CD8-positive, alpha-beta T cell (primary cell): ENCODE measurements at regions of chr2 and their contacts with region 1.

Region 1: DNA sequence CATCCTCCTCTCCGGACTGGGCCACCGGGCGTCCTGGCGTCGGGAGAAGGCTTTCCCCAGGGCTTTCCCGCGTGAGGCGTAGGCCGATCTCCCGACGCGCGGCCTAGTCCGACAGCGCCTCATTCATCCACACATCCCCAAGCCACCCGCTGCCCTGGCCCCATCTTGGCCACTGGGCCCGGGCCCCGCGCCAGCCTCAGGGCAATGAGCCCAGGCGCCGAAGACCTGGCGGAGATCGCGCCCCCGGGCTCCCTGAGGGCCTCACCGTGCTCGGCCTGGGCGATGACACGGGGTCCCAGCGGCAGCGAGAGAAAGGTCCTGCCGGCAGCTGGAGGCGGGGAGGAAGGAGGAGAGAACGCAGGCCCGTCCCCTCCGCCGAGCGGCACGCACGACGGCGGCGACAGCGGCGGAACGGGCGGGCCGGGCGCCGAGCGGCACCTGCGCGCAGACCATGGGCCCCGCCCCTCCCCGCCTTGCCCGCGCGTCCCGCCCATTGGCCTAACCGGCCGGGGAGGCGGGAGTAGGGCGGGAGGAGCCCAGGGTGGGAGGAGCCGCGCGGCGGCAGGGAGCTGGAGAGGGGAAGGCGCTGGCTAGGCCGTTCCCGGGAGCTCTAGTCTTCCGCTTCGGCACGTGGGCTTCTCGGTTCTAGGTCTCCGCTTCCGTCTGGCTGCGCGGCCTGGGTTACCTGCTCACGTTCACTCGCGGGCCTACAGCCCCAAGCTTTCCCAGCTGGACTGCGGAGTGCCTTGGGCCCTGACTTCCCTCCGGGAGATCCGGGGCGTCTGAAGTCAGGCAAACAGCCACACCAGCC is at the start of gene OLA1:
- DNase-seq: peak; percentile 90 to 98 (median 96)
- ATAC-seq: peak; percentile 96
- H3K4me3 ChIP-seq: peak within 1 kb of the TSS; percentile 78 to 94
- H3K4me3 Mint-ChIP-seq: peak within 1 kb of the TSS; percentile 84
- H3K27ac ChIP-seq: peak within 1 kb of the TSS; percentile 49 to 78
- H3K27ac Mint-ChIP-seq: peak within 1 kb of the TSS; percentile 80
- H3K4me1 ChIP-seq: peaks cover 6% of the 10 kb centered on the region
- H3K4me1 Mint-ChIP-seq: peaks cover 31% of the 10 kb centered on the region
- H3K27me3 ChIP-seq: no peaks in the 10 kb centered on the region
- H3K27me3 Mint-ChIP-seq: no peaks in the 10 kb centered on the region
- CTCF ChIP-seq: no peak
- total RNA-seq, gene OLA1: 35.3 to 38.8 TPM

Region 2: GRCh38 chr2:173734797-173735196 is 513.6 kb before region 1 on chr2:
- CTCF ChIA-PET with region 1: no interaction called
- POLR2A ChIA-PET with region 1: no interaction called
- intact Hi-C with region 1: no loop called
- DNase-seq: no peak
- ATAC-seq: no peak
- H3K4me3 ChIP-seq: no peak overlapping the region
- H3K4me3 Mint-ChIP-seq: no peak overlapping the region
- H3K27ac ChIP-seq: no peak overlapping the region
- H3K27ac Mint-ChIP-seq: no peak overlapping the region
- H3K4me1 ChIP-seq: no peaks in the 10 kb centered on the region
- H3K4me1 Mint-ChIP-seq: no peaks in the 10 kb centered on the region
- H3K27me3 ChIP-seq: no peaks in the 10 kb centered on the region
- H3K27me3 Mint-ChIP-seq: peaks cover 15% of the 10 kb centered on the region
- CTCF ChIP-seq: no peak

Region 3: DNA sequence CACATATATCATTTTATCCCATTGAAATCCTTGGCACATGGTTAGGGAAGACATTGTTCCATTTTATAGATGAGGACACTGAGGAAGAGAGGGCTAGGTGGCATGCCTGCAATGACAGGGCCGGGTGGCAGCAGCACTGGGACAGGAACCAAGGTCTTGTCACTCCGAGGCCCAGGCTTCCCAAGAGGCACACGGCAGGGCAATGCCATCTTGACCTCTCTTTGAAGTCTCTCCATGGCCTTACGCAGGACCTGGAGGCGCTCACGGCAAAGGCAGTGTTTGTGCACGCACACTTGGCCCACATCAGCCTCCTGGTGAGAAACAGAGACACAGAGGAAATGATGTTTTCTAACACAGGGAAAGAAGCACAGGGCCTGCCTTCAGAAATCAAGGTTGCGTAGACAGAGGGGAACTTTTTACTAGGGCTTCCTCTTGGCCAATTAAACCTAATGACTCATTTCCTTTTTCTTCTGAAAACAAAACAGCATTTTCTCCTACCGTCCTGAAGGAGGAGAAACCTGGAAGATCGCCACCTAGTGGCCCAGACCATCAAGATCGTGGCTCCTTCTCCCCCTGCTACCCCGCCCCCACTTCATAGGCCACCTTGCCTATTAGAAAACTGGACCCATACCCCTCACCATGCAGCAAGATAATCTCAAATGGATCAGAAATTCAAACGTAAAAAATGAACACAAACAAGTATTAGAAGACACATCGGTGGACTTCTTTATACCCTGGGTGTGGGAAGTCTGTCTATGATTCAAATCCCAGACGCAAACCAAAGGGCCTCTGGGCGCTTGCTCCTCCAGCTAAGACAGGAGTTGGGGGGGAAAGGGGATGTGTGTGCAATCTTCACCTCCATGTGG is 208.6 kb before region 1 on chr2:
- CTCF ChIA-PET with region 1: no interaction called
- POLR2A ChIA-PET with region 1: no interaction called
- intact Hi-C with region 1: loop called in 1 of 2 experiments (anchors 10 kb)
- DNase-seq: peak; percentile 54 to 93 (median 85)
- ATAC-seq: peak; percentile 94
- H3K4me3 ChIP-seq: peak overlapping the region; percentile 3 to 43
- H3K4me3 Mint-ChIP-seq: peak overlapping the region; percentile 69
- H3K27ac ChIP-seq: peak overlapping the region; percentile 47 to 84
- H3K27ac Mint-ChIP-seq: peak overlapping the region; percentile 87
- H3K4me1 ChIP-seq: peaks cover 5% of the 10 kb centered on the region
- H3K4me1 Mint-ChIP-seq: peaks cover 8% of the 10 kb centered on the region
- H3K27me3 ChIP-seq: no peaks in the 10 kb centered on the region
- H3K27me3 Mint-ChIP-seq: no peaks in the 10 kb centered on the region
- CTCF ChIP-seq: peak; percentile 67

Region 4: DNA sequence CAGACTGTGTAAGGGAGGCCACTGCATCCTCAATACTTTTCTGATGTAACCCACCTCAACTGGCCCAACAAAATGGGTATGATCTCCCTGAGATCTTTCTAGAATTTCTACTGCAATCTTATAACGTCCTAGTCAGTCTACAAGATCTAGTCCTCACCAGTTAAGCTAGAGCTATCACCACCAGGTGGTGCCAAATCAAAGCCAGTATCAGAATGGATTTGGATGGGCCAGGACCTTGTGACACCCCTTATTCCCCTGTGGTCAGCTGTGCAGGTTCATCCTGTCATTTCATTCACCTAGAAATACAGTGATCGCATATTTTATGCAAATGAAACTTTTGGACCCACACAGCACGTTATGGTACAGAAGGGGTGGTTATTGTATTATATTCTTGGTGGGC is 90.4 kb before region 1 on chr2:
- CTCF ChIA-PET with region 1: no interaction called
- POLR2A ChIA-PET with region 1: no interaction called
- intact Hi-C with region 1: no loop called
- DNase-seq: peak in 7 of 9 experiments; percentile 2 to 48 (median 20)
- ATAC-seq: peak; percentile 36
- H3K4me3 ChIP-seq: no peak overlapping the region
- H3K4me3 Mint-ChIP-seq: no peak overlapping the region
- H3K27ac ChIP-seq: no peak overlapping the region
- H3K27ac Mint-ChIP-seq: no peak overlapping the region
- H3K4me1 ChIP-seq: no peaks in the 10 kb centered on the region
- H3K4me1 Mint-ChIP-seq: peaks cover 4% of the 10 kb centered on the region
- H3K27me3 ChIP-seq: no peaks in the 10 kb centered on the region
- H3K27me3 Mint-ChIP-seq: no peaks in the 10 kb centered on the region
- CTCF ChIP-seq: no peak

Region 5: GRCh38 chr2:174280596-174280995 is 32.2 kb after region 1 on chr2:
- CTCF ChIA-PET with region 1: no interaction called
- POLR2A ChIA-PET with region 1: no interaction called
- intact Hi-C with region 1: no loop called
- DNase-seq: no peak
- ATAC-seq: no peak
- H3K4me3 ChIP-seq: no peak overlapping the region
- H3K4me3 Mint-ChIP-seq: no peak overlapping the region
- H3K27ac ChIP-seq: no peak overlapping the region
- H3K27ac Mint-ChIP-seq: no peak overlapping the region
- H3K4me1 ChIP-seq: no peaks in the 10 kb centered on the region
- H3K4me1 Mint-ChIP-seq: no peaks in the 10 kb centered on the region
- H3K27me3 ChIP-seq: peaks cover 0 to 2% of the 10 kb centered on the region in 2 experiments
- H3K27me3 Mint-ChIP-seq: peaks cover 28% of the 10 kb centered on the region
- CTCF ChIP-seq: no peak

Region 6: DNA sequence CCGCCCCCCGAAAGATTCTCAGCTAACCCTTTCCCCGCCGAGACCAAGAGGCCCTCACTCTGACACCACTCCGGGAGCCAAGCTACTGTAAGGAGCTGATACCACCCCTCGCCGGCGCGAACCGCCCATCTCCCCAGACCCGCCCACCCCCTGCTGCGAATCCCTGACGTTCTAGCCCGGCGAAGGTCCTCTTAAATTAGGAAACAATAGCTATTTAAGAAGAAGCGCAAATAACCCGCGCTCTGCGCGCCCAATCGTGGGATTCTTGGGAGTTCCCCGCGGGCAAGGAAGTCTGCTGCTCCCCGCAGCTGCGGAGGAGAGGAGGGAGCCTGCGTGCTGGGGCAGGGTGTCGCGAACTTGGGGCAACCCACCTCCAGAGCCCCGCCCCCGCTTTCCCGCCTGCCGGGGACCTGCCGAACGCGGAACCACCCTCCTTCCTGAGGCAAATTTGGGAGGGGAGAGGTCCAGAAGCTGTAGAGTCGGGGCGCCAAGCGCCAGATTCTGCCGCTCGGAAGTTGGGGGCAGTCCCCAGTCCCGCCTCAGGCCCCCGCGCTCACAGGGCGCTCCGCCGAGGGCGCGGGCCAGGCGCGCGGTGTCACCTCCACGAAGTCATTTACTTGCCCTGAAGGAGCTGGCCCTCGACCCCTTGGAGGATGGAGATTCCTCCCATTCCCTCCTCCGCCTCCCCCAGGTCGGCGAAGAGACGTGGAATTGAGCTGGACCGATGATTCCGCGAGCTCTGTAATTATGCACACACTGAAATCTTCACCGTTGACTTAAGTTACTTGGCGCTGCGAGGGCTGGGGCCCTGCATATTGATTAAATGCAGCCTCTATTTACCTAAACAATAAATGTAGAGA is 78.0 kb after region 1 on chr2:
- CTCF ChIA-PET with region 1: no interaction called
- POLR2A ChIA-PET with region 1: no interaction called
- intact Hi-C with region 1: loop called in 1 of 2 experiments (anchors 5 kb)
- DNase-seq: peak in 3 of 9 experiments; percentile 29 to 60 (median 50)
- ATAC-seq: peak; percentile 42
- H3K4me3 ChIP-seq: peak overlapping the region; percentile 33 to 35
- H3K4me3 Mint-ChIP-seq: peak overlapping the region; percentile 76
- H3K27ac ChIP-seq: no peak overlapping the region
- H3K27ac Mint-ChIP-seq: no peak overlapping the region
- H3K4me1 ChIP-seq: peaks cover 24% of the 10 kb centered on the region
- H3K4me1 Mint-ChIP-seq: peaks cover 29% of the 10 kb centered on the region
- H3K27me3 ChIP-seq: peaks cover 59% of the 10 kb centered on the region in 2 experiments
- H3K27me3 Mint-ChIP-seq: peaks cover 76% of the 10 kb centered on the region
- CTCF ChIP-seq: no peak

Region 7: DNA sequence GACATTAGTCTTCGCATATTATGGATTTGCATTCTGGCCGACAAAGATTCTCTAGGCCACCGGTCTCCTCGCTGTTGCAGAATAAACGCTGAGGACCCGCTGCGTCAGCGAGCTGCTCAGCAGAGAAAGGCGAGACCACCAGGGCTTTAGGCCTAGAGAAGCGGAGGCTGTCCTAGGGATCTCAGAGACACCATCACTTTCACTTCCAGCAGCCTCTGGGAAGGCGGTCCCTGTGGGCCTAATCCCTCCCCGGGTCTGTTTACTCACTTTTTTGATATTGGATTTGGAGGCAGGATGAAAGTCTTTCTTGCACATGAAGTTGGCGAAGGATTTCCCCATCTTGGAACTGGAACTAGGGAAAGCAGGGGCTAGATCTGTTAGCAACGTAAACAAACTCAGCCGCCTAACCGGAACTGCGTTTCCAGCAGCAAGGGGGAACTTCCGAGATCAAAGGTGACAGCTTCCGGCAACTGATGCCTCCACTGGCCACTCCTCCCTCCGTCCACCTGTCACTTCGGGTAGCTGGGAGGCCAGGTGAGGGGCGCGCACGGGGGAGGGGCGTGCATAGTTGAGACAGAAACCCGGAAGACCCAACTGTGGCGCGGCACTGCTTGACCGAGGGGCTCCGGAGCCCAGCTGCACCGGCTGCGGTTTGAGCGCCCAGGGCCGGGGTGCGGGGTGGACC is 147.0 kb after region 1 on chr2 and contains the start of gene SCRN3:
- CTCF ChIA-PET with region 1: no interaction called
- POLR2A ChIA-PET with region 1: no interaction called
- intact Hi-C with region 1: loop called (anchors 1 to 5 kb)
- DNase-seq: peak; percentile 55 to 92 (median 79)
- ATAC-seq: peak; percentile 90
- H3K4me3 ChIP-seq: peak within 1 kb of the TSS; percentile 78 to 91
- H3K4me3 Mint-ChIP-seq: peak within 1 kb of the TSS; percentile 98
- H3K27ac ChIP-seq: peak within 1 kb of the TSS; percentile 93 to 97
- H3K27ac Mint-ChIP-seq: peak within 1 kb of the TSS; percentile 100
- H3K4me1 ChIP-seq: peaks cover 29% of the 10 kb centered on the region
- H3K4me1 Mint-ChIP-seq: peaks cover 55% of the 10 kb centered on the region
- H3K27me3 ChIP-seq: no peaks in the 10 kb centered on the region
- H3K27me3 Mint-ChIP-seq: no peaks in the 10 kb centered on the region
- CTCF ChIP-seq: no peak
- total RNA-seq, gene SCRN3: 5.9 to 7.3 TPM

Region 8: DNA sequence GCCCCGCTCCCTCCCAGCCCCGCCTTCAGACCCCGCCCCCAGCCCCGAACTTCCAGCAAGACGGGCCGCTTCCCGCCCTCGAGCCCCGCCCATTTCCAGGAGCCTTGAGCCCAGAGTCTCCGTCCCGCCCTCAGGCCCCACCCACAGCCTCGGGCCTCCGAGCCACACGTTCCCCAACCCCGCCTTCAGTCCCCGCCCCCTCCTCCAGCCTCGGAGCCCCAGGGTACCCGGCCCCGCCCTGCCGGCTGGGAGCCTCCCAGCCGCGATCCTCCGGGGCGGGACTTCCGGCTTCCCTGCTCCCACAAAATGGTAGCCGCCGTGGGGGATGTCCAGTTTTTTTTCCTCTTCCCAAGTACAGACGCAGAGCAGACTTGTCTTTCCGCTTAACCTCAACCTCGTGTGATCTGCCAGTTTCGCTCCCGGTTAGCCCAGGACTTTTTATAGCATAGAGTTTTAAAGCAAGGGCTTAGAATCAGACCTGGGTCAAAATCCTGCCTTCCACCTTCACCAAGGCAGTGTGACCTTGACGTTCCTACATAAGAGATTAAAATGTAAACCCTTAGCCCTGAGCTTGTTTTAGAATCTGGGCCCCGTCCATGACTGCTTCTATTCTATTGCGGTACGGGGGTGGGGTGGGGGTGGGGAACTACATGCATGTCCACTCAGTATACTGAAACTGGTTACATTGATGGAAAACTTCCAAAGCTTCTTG is 238.9 kb after region 1 on chr2:
- CTCF ChIA-PET with region 1: no interaction called
- POLR2A ChIA-PET with region 1: no interaction called
- intact Hi-C with region 1: loop called in 1 of 2 experiments (anchors 2 kb)
- DNase-seq: peak; percentile 77 to 98 (median 97)
- ATAC-seq: peak; percentile 74
- H3K4me3 ChIP-seq: peak overlapping the region; percentile 83 to 86
- H3K4me3 Mint-ChIP-seq: peak overlapping the region; percentile 97
- H3K27ac ChIP-seq: peak overlapping the region; percentile 69 to 85
- H3K27ac Mint-ChIP-seq: peak overlapping the region; percentile 88
- H3K4me1 ChIP-seq: peaks cover 59% of the 10 kb centered on the region
- H3K4me1 Mint-ChIP-seq: peaks cover 73% of the 10 kb centered on the region
- H3K27me3 ChIP-seq: no peaks in the 10 kb centered on the region
- H3K27me3 Mint-ChIP-seq: no peaks in the 10 kb centered on the region
- CTCF ChIP-seq: no peak

Region 9: GRCh38 chr2:175167792-175168563 is 919.6 kb after region 1 on chr2 and contains the start of gene ATF2:
- CTCF ChIA-PET with region 1: no interaction called
- POLR2A ChIA-PET with region 1: no interaction called
- intact Hi-C with region 1: loop called in 1 of 2 experiments (anchors 2 kb)
- DNase-seq: peak; percentile 94 to 100 (median 96)
- ATAC-seq: peak; percentile 91
- H3K4me3 ChIP-seq: peak within 1 kb of the TSS; percentile 95 to 99
- H3K4me3 Mint-ChIP-seq: peak within 1 kb of the TSS; percentile 100
- H3K27ac ChIP-seq: peak within 1 kb of the TSS; percentile 87 to 92
- H3K27ac Mint-ChIP-seq: peak within 1 kb of the TSS; percentile 99
- H3K4me1 ChIP-seq: peaks cover 19% of the 10 kb centered on the region
- H3K4me1 Mint-ChIP-seq: peaks cover 48% of the 10 kb centered on the region
- H3K27me3 ChIP-seq: no peaks in the 10 kb centered on the region
- H3K27me3 Mint-ChIP-seq: no peaks in the 10 kb centered on the region
- CTCF ChIP-seq: no peak
- total RNA-seq, gene ATF2: 42.9 to 43.6 TPM

Region 10: DNA sequence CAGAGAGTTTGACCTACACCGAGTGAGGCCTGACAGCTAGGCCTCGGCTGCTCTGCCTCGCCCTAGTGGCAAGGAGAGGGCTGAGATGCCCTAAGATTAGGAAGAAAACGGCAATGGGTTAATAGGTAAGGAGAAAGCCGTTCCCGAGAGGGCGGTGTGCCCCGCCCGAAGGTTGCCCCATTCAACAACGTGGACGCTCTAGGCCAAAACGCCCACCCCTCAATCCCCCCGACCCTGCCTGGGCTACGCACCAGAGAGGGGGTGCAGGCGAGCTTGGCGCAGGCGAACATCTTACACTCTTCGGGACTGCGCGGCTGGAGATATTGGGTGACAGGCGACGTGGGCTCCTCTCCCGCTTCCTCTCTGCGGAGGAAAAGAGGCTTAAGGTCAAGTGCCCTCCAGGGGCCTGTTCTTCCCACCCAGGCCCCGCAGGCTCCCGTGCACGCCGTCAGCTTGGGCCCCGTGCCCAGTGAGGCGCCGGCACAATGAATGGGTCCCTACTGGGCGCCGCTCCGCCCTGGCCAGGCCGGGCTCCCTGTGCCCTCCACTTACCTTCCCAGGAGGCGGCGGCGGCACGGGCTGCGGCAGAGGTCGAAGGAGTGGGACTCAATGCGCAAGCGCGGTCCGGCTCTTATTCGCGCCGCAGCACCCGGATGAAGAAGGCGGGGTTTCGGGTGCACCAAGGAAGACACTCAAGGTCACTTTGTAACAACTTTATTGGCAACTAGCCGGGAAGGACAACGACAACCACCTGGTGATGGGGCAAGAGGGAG is 932.9 kb after region 1 on chr2 and contains the start of gene ATP5MC3:
- CTCF ChIA-PET with region 1: no interaction called
- POLR2A ChIA-PET with region 1: no interaction called
- intact Hi-C with region 1: loop called in 1 of 2 experiments (anchors 10 kb)
- DNase-seq: peak; percentile 80 to 97 (median 92)
- ATAC-seq: peak; percentile 90
- H3K4me3 ChIP-seq: peak within 1 kb of the TSS; percentile 88 to 96
- H3K4me3 Mint-ChIP-seq: peak within 1 kb of the TSS; percentile 94
- H3K27ac ChIP-seq: peak within 1 kb of the TSS; percentile 73 to 76
- H3K27ac Mint-ChIP-seq: peak within 1 kb of the TSS; percentile 87
- H3K4me1 ChIP-seq: peaks cover 13% of the 10 kb centered on the region
- H3K4me1 Mint-ChIP-seq: peaks cover 27% of the 10 kb centered on the region
- H3K27me3 ChIP-seq: no peaks in the 10 kb centered on the region
- H3K27me3 Mint-ChIP-seq: no peaks in the 10 kb centered on the region
- CTCF ChIP-seq: no peak
- total RNA-seq, gene ATP5MC3: 70.2 to 73.4 TPM